IMR-90 (cell line): ENCODE measurements at regions of chr2 and their contacts with region 1.

Region 1: DNA sequence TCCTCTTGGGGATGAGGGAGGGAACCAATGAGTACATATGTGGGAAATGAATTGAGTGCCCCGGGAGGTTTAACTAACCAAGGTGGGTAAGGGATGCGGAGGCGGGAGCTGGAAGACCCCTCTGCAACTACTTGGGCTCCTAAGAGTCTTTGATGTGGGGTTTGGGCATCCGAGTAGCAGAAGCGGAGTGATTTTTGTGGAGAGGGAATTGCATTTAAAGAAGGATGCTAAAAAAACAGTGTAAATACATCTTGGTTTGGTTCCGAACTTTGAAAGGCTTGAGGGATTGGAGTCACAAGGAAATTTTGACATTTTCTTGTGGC is 215.7 kb downstream of the MCFD2 start:
- DNase-seq: peak; percentile 28
- ATAC-seq: no peak
- H3K4me3 ChIP-seq: peak overlapping the region; percentile 99
- H3K27ac ChIP-seq: peak overlapping the region; percentile 98
- H3K4me1 ChIP-seq: peaks cover 3% of the 10 kb centered on the region
- H3K27me3 ChIP-seq: no peaks in the 10 kb centered on the region
- CTCF ChIP-seq: no peak
- POLR2A ChIP-seq: no peak
- RAD21 ChIP-seq: no peak

Region 2: DNA sequence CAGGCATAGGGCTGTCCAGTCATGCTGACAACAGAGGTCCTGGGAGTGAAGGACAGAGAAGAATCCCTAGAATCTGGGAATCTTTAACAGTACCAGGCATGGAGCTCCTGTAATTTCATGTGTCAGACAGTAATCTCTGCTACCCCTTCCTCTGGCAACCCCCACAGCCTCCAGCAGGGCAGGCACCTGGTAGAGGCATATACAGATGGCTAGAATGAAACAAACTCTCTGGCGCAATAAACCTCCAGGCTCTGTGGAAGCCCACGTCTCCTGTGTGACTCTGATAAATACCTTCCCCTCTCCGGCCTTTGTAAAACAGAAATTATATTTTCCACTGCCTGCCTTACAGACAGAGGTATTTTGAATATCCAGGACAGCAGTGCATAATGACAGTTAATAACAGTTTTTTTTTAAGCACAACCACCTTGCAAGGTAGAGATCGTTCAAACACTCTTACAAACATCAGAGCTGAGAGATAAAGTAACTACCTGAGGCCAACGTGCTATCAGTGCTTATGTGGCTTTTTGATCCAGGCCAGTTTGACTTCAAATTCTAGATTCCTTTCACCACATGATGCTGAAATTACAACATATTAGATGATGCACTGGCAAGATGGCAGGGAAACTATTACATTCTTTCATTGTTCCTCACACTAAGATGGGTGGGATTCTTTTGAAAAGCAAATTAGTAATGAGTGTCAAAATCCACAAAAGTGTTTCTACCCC is 268.3 kb before region 1 on chr2:
- CTCF ChIA-PET with region 1: no interaction called
- POLR2A ChIA-PET with region 1: no interaction called
- dilution Hi-C with region 1: no loop called
- in situ Hi-C with region 1: no loop called
- intact Hi-C with region 1: no loop called
- DNase-seq: peak; percentile 70
- ATAC-seq: no peak
- H3K4me3 ChIP-seq: no peak overlapping the region
- H3K27ac ChIP-seq: peak overlapping the region; percentile 13; the same call in 1 of the 2 replicates
- H3K4me1 ChIP-seq: peaks cover 22% of the 10 kb centered on the region
- H3K27me3 ChIP-seq: no peaks in the 10 kb centered on the region
- CTCF ChIP-seq: no peak
- POLR2A ChIP-seq: no peak
- RAD21 ChIP-seq: no peak

Region 3: GRCh38 chr2:46650556-46651001 is 49.3 kb before region 1 on chr2:
- CTCF ChIA-PET with region 1: no interaction called
- POLR2A ChIA-PET with region 1: no interaction called
- dilution Hi-C with region 1: no loop called
- in situ Hi-C with region 1: no loop called
- intact Hi-C with region 1: loop called (anchors 5 kb)
- DNase-seq: peak; percentile 90
- ATAC-seq: peak; percentile 25
- H3K4me3 ChIP-seq: no peak overlapping the region
- H3K27ac ChIP-seq: no peak overlapping the region
- H3K4me1 ChIP-seq: peaks cover 28% of the 10 kb centered on the region
- H3K27me3 ChIP-seq: no peaks in the 10 kb centered on the region
- CTCF ChIP-seq: peak; percentile 95
- POLR2A ChIP-seq: peak; percentile 37; the same call in 1 of the 2 replicates
- RAD21 ChIP-seq: peak; percentile 90

Region 4: GRCh38 chr2:46749042-46749531 is 49.2 kb after region 1 on chr2:
- CTCF ChIA-PET with region 1: no interaction called
- POLR2A ChIA-PET with region 1: no interaction called
- dilution Hi-C with region 1: no loop called
- in situ Hi-C with region 1: no loop called
- intact Hi-C with region 1: loop called (anchors 5 kb)
- DNase-seq: peak; percentile 88
- ATAC-seq: peak; percentile 81
- H3K4me3 ChIP-seq: no peak overlapping the region
- H3K27ac ChIP-seq: peak overlapping the region; percentile 31; the same call in 1 of the 2 replicates
- H3K4me1 ChIP-seq: peaks cover 19% of the 10 kb centered on the region
- H3K27me3 ChIP-seq: no peaks in the 10 kb centered on the region
- CTCF ChIP-seq: no peak
- POLR2A ChIP-seq: no peak
- RAD21 ChIP-seq: no peak

Region 5: GRCh38 chr2:46769809-46770208 is 69.9 kb after region 1 on chr2:
- CTCF ChIA-PET with region 1: no interaction called
- POLR2A ChIA-PET with region 1: no interaction called
- dilution Hi-C with region 1: no loop called
- in situ Hi-C with region 1: no loop called
- intact Hi-C with region 1: loop called (anchors 5 kb)
- DNase-seq: peak; percentile 23
- ATAC-seq: no peak
- H3K4me3 ChIP-seq: no peak overlapping the region
- H3K27ac ChIP-seq: no peak overlapping the region; the same call in 1 of the 2 replicates
- H3K4me1 ChIP-seq: peaks cover 9% of the 10 kb centered on the region
- H3K27me3 ChIP-seq: no peaks in the 10 kb centered on the region
- CTCF ChIP-seq: 0 out of 2 replicates have a peak, but pooled peaks have one; percentile 3
- POLR2A ChIP-seq: no peak
- RAD21 ChIP-seq: no peak

Region 6: DNA sequence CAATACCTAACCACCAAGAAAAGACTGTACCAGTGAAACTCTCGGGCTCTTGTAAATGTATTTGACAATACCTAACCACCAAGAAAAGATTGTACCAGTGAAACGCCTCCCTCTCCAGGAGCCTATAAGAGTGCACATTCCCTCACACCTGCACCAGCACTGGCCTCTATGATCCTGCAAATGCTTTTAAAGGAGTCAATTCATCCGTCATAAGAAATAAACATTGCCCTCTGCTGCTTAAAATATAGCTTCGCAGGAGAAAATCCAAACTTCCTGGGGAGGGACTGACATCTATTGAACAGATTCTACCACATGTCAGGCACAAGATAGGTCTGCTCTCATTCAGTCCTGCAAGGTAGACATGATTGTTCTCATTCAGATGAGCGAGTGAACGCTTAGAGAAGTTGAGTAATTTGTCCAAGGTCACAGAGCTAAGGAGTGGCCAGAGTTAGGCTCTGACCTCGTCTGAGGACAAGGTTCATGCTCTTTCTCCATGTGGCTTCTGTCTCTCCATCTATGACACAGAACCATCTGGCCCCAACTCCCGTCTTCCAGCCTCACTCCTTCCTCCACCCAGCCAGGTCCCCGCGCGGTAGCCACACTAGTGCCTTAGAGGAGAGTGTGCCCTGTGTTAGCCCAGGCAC is 177.0 kb after region 1 on chr2:
- CTCF ChIA-PET with region 1: no interaction called
- POLR2A ChIA-PET with region 1: no interaction called
- dilution Hi-C with region 1: no loop called
- in situ Hi-C with region 1: no loop called
- intact Hi-C with region 1: loop called (anchors 2 kb)
- DNase-seq: peak; percentile 88
- ATAC-seq: peak; percentile 10
- H3K4me3 ChIP-seq: no peak overlapping the region
- H3K27ac ChIP-seq: peak overlapping the region; percentile 72
- H3K4me1 ChIP-seq: peaks cover 49% of the 10 kb centered on the region
- H3K27me3 ChIP-seq: no peaks in the 10 kb centered on the region
- CTCF ChIP-seq: peak; percentile 71
- POLR2A ChIP-seq: no peak
- RAD21 ChIP-seq: peak; percentile 77

Region 7: DNA sequence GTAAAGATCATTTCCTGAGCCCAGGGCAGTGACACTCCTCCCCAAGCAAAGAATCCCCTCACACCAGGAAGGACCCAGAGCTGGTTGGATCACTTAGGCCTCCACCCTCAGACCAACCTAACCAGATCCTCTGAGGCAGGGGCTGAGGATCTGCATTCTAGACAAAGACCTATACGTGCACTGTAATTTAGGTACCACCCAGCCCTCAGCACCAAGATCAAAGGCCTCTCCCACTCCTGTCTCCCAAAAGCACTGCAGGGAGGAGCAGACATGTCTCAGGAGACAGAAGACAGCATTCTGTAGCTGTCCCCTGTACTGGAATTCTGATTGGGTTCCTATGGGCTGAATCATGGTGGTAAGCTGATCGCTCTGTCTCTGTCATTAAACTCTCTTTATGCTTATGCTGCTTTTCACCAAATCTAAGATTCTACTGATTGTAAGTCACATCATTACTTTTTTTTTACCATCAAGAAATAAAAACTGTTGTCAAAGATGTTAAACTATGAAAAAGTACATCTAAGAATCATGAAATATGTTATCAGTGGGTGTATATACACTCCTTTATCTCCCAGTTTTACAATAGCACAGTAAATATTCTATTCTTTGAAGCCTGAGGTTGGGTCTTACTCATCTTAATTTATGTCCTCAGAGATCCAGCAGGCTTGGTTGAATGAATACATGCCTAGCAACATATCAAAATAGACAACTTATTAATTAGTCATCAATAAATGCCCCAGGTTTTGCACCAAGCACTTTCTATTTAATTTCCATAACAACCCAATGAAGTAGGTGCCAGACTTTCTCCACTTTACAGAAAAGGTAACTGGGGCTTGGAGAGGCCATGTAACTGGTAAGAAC is 187.4 kb after region 1 on chr2:
- CTCF ChIA-PET with region 1: no interaction called
- POLR2A ChIA-PET with region 1: no interaction called
- dilution Hi-C with region 1: no loop called
- in situ Hi-C with region 1: no loop called
- intact Hi-C with region 1: loop called (anchors 2 kb)
- DNase-seq: peak; percentile 60
- ATAC-seq: peak; percentile 25; the same call in 1 of the 2 replicates
- H3K4me3 ChIP-seq: no peak overlapping the region
- H3K27ac ChIP-seq: peak overlapping the region; percentile 92
- H3K4me1 ChIP-seq: peaks cover 32% of the 10 kb centered on the region
- H3K27me3 ChIP-seq: no peaks in the 10 kb centered on the region
- CTCF ChIP-seq: no peak
- POLR2A ChIP-seq: no peak
- RAD21 ChIP-seq: no peak